CD8-positive, alpha-beta T cell (primary cell): ENCODE measurements at regions of chr9 and their contacts with region 1.

Region 1: GRCh38 chr9:75088260-75088905 is at the start of gene OSTF1:
- DNase-seq: peak; percentile 85 to 98 (median 92)
- ATAC-seq: peak; percentile 78
- H3K4me3 ChIP-seq: peak within 1 kb of the TSS; percentile 92 to 98
- H3K4me3 Mint-ChIP-seq: peak within 1 kb of the TSS; percentile 98
- H3K27ac ChIP-seq: peak within 1 kb of the TSS; percentile 89 to 95
- H3K27ac Mint-ChIP-seq: peak within 1 kb of the TSS; percentile 97
- H3K4me1 ChIP-seq: peaks cover 52% of the 10 kb centered on the region
- H3K4me1 Mint-ChIP-seq: peaks cover 74% of the 10 kb centered on the region
- H3K27me3 ChIP-seq: no peaks in the 10 kb centered on the region
- H3K27me3 Mint-ChIP-seq: no peaks in the 10 kb centered on the region
- CTCF ChIP-seq: no peak
- total RNA-seq, gene OSTF1: 29.1 to 30.3 TPM

Region 2: DNA sequence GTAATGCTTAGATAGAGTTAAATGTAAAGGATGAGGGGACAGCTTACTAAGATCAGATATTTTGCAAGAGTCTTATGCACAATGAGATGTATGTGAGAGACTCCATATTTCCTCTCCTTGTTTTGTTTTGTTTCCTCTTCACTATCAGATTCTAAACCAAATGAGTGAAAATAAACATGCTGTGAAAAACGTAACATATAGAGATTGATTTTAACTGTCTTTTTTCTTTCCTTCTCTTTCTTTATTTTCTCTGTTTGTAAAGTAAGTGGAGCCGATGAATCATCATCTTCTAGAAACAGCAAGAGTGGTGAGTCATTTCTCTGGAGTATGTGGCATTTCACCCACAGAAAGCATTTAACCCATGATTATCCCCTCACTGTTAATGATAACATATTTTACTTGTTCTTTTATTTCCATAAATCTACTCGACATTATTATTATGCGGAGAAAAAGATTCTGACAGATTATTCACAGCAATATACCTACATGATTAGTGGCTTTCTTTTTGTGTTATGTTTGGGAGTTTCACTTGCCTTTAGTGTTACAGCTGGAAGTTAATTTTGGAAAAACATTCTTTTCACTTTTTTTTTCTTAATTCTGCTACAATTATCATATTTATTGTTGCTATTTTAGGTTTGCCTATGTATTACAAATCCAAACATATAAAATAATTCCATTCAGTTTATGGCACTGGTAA is 1938.9 kb before region 1 on chr9:
- CTCF ChIA-PET with region 1: no interaction called
- POLR2A ChIA-PET with region 1: no interaction called
- intact Hi-C with region 1: loop called in 1 of 2 experiments (anchors 10 kb)
- DNase-seq: peak in 2 of 9 experiments; percentile 66 to 73
- ATAC-seq: peak; percentile 59
- H3K4me3 ChIP-seq: no peak overlapping the region
- H3K4me3 Mint-ChIP-seq: peak overlapping the region; percentile 54
- H3K27ac ChIP-seq: peak overlapping the region in 1 of 2 experiments; percentile 44
- H3K27ac Mint-ChIP-seq: peak overlapping the region; percentile 69
- H3K4me1 ChIP-seq: peaks cover 51% of the 10 kb centered on the region
- H3K4me1 Mint-ChIP-seq: peaks cover 55% of the 10 kb centered on the region
- H3K27me3 ChIP-seq: no peaks in the 10 kb centered on the region
- H3K27me3 Mint-ChIP-seq: no peaks in the 10 kb centered on the region
- CTCF ChIP-seq: no peak

Region 3: DNA sequence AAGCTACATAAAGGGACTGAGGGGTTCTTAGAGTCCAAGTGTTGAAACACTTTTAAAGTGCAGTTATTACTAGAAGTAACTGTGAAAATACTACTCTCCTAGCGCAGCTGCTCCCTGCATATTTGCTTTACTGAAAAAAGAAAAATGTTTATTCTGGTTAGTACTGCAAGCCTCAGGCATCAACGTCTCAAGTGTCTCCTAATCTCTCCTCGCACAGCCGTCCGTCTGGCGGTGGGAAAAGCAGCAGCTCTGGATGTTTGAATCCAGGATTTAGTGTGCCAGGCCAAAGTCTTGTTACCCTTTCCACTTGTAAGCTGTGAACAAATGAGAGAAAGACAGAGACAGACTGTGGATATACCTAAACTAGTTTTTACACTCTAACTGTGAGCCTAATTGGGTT is 560.2 kb before region 1 on chr9:
- CTCF ChIA-PET with region 1: no interaction called
- POLR2A ChIA-PET with region 1: no interaction called
- intact Hi-C with region 1: no loop called
- DNase-seq: no peak
- ATAC-seq: no peak
- H3K4me3 ChIP-seq: no peak overlapping the region
- H3K4me3 Mint-ChIP-seq: no peak overlapping the region
- H3K27ac ChIP-seq: no peak overlapping the region
- H3K27ac Mint-ChIP-seq: no peak overlapping the region
- H3K4me1 ChIP-seq: no peaks in the 10 kb centered on the region
- H3K4me1 Mint-ChIP-seq: no peaks in the 10 kb centered on the region
- H3K27me3 ChIP-seq: no peaks in the 10 kb centered on the region
- H3K27me3 Mint-ChIP-seq: peaks cover 5% of the 10 kb centered on the region
- CTCF ChIP-seq: no peak

Region 4: DNA sequence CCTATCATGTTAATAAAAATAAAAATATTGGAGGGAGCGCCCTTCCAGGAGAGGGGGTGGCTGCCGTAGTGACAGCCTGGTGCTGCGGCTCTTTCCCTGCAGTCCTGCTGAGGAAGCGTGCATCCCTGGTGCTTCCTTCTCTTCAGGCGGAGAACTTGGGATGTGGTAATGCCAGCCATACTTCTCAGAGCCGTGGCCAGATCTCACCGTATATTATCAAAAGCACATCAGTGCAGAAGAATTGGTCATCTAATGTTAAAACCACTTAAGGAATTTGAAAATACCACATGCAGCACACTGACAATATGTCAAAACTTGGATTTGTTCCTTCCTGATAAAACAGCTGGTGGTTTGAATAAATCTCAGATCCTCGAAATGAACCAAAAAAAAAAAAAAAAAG is 153.4 kb before region 1 on chr9:
- CTCF ChIA-PET with region 1: no interaction called
- POLR2A ChIA-PET with region 1: no interaction called
- intact Hi-C with region 1: no loop called
- DNase-seq: no peak
- ATAC-seq: no peak
- H3K4me3 ChIP-seq: no peak overlapping the region
- H3K4me3 Mint-ChIP-seq: no peak overlapping the region
- H3K27ac ChIP-seq: no peak overlapping the region
- H3K27ac Mint-ChIP-seq: no peak overlapping the region
- H3K4me1 ChIP-seq: no peaks in the 10 kb centered on the region
- H3K4me1 Mint-ChIP-seq: no peaks in the 10 kb centered on the region
- H3K27me3 ChIP-seq: no peaks in the 10 kb centered on the region
- H3K27me3 Mint-ChIP-seq: peaks cover 11% of the 10 kb centered on the region
- CTCF ChIP-seq: no peak

Region 5: DNA sequence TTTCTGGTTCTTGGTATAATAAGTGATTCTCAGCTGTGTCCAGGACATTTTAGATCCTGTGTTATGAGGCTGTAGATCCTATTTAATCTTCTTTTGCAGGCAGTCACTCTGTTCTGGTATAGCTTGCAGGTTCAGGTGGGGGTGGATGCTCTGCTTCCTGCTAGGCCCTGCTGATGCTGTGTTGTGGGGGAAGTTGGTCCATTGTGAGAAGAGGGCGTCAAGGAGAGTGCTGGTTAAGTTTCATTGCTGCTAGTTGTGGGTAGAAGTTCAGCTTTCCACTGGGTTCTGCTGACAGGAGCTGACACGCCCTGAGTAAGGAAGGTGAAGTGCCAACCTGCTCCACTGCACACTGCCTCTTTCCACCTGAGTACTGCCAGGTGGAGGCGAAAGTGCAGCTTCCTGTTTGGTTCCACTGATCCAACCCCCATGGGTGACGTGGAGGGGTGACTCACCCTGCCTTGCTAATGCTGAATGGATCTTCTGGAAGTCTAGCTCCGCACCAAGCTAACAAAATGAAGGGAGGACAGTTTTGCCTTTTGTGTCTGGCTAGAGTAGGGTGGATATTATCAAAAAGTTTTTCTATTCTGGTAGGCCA is 16.8 kb before region 1 on chr9:
- CTCF ChIA-PET with region 1: interaction called, 10 read pairs
- POLR2A ChIA-PET with region 1: interaction called, 3 read pairs
- intact Hi-C with region 1: no loop called
- DNase-seq: peak in 6 of 9 experiments; percentile 44 to 75 (median 58)
- ATAC-seq: peak; percentile 97
- H3K4me3 ChIP-seq: no peak overlapping the region
- H3K4me3 Mint-ChIP-seq: no peak overlapping the region
- H3K27ac ChIP-seq: no peak overlapping the region
- H3K27ac Mint-ChIP-seq: peak overlapping the region; percentile 85
- H3K4me1 ChIP-seq: peaks cover 7% of the 10 kb centered on the region
- H3K4me1 Mint-ChIP-seq: peaks cover 17% of the 10 kb centered on the region
- H3K27me3 ChIP-seq: no peaks in the 10 kb centered on the region
- H3K27me3 Mint-ChIP-seq: no peaks in the 10 kb centered on the region
- CTCF ChIP-seq: no peak

Region 6: GRCh38 chr9:75128535-75128934 is 40.2 kb after region 1 on chr9:
- CTCF ChIA-PET with region 1: interaction called, 3 read pairs
- POLR2A ChIA-PET with region 1: no interaction called
- intact Hi-C with region 1: loop called in 1 of 2 experiments (anchors 5 kb)
- DNase-seq: no peak
- ATAC-seq: no peak
- H3K4me3 ChIP-seq: no peak overlapping the region
- H3K4me3 Mint-ChIP-seq: no peak overlapping the region
- H3K27ac ChIP-seq: no peak overlapping the region
- H3K27ac Mint-ChIP-seq: peak overlapping the region; percentile 66
- H3K4me1 ChIP-seq: peaks cover 5% of the 10 kb centered on the region
- H3K4me1 Mint-ChIP-seq: peaks cover 53% of the 10 kb centered on the region
- H3K27me3 ChIP-seq: no peaks in the 10 kb centered on the region
- H3K27me3 Mint-ChIP-seq: no peaks in the 10 kb centered on the region
- CTCF ChIP-seq: no peak

Region 7: GRCh38 chr9:75148561-75148960 is 60.2 kb after region 1 on chr9:
- CTCF ChIA-PET with region 1: interaction called, 11 read pairs
- POLR2A ChIA-PET with region 1: interaction called, 18 read pairs
- intact Hi-C with region 1: loop called (anchors 1 to 5 kb)
- DNase-seq: peak in 2 of 9 experiments; percentile 16 to 34
- ATAC-seq: no peak
- H3K4me3 ChIP-seq: no peak overlapping the region
- H3K4me3 Mint-ChIP-seq: peak overlapping the region; percentile 55
- H3K27ac ChIP-seq: peak overlapping the region; percentile 12 to 70
- H3K27ac Mint-ChIP-seq: peak overlapping the region; percentile 88
- H3K4me1 ChIP-seq: peaks cover 78% of the 10 kb centered on the region
- H3K4me1 Mint-ChIP-seq: peaks cover 84% of the 10 kb centered on the region
- H3K27me3 ChIP-seq: no peaks in the 10 kb centered on the region
- H3K27me3 Mint-ChIP-seq: no peaks in the 10 kb centered on the region
- CTCF ChIP-seq: no peak

Region 8: GRCh38 chr9:75890472-75891276 is 802.3 kb after region 1 on chr9 and contains the start of gene PCSK5:
- CTCF ChIA-PET with region 1: no interaction called
- POLR2A ChIA-PET with region 1: interaction called, 4 read pairs
- intact Hi-C with region 1: loop called (anchors 2 to 5 kb)
- DNase-seq: peak; percentile 66 to 92 (median 85)
- ATAC-seq: peak; percentile 90
- H3K4me3 ChIP-seq: peak within 1 kb of the TSS; percentile 81 to 82
- H3K4me3 Mint-ChIP-seq: peak within 1 kb of the TSS; percentile 92
- H3K27ac ChIP-seq: peak within 1 kb of the TSS; percentile 60 to 70
- H3K27ac Mint-ChIP-seq: peak within 1 kb of the TSS; percentile 85
- H3K4me1 ChIP-seq: peaks cover 16% of the 10 kb centered on the region
- H3K4me1 Mint-ChIP-seq: peaks cover 54% of the 10 kb centered on the region
- H3K27me3 ChIP-seq: peaks cover 0 to 6% of the 10 kb centered on the region in 2 experiments
- H3K27me3 Mint-ChIP-seq: no peaks in the 10 kb centered on the region
- CTCF ChIP-seq: no peak
- total RNA-seq, gene PCSK5: 13.7 to 13.8 TPM